Common myeloid progenitor, CD34-positive (primary cell): ENCODE measurements at regions of chr20 and their contacts with region 1.

Region 1: GRCh38 chr20:50460460-50461267 is 49.5 kb upstream of the PTPN1 start:
- DNase-seq: peak; percentile 67 to 74 (median 69)
- H3K4me3 ChIP-seq: no peak overlapping the region
- H3K27ac ChIP-seq: no peak overlapping the region
- H3K4me1 ChIP-seq: peaks cover 4 to 36% (median 32%) of the 10 kb centered on the region in 4 experiments
- H3K27me3 ChIP-seq: no peaks in the 10 kb centered on the region

Region 2: GRCh38 chr20:50189681-50190582 is 270.7 kb before region 1 on chr20:
- CTCF ChIA-PET with region 1: interaction called, 262 read pairs
- POLR2A ChIA-PET with region 1: interaction called, 3 read pairs
- DNase-seq: peak; percentile 83 to 91 (median 90)
- H3K4me3 ChIP-seq: peak overlapping the region in 6 of 7 experiments; percentile 79 to 91 (median 86)
- H3K27ac ChIP-seq: peak overlapping the region; percentile 61 to 91
- H3K4me1 ChIP-seq: peaks cover 2 to 48% (median 38%) of the 10 kb centered on the region in 4 experiments
- H3K27me3 ChIP-seq: no peaks in the 10 kb centered on the region

Region 3: DNA sequence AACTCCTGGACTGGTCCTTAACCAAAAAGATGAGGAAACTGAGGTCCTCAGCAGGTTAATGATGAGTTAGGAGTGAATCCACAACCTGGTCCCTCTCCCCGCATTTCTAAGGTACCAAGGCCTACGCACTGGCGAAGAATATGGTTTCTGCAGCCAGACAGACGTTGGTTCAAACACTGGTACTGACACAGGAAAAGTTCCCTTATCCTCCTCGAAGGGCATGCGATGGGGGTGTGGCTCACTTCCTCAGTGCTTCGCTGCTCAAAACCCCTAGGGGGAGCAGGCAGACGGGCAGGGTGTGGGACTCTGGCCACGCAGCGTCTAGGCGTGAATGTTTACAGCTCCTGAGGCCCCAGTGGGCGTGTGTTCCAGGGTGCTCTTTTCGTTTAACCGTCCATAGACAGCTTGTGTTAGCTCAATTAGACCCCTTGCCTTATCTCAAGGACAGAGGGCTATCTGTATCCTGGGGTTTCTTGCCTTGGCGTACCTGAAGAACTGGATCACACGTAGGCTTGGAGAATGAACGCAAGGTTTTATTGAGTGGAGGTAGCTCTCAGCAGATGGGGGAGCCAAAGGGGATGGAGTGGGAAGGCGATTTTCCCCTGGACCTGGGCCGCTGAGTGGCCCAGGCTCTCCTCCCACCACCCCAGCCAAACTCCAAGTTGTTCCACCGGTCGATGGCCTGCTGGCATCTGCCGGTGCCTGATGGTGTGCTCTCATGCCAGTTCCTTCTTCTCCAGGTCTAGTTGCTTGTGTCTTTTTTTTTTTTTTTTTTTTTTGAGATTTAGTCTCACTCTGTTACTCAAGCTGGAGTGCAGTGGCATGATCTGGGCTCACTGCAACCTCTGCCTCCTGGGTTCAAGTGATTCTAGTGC is 17.7 kb after region 1 on chr20:
- CTCF ChIA-PET with region 1: interaction called, 12 read pairs
- POLR2A ChIA-PET with region 1: no interaction called
- DNase-seq: peak; percentile 79 to 90 (median 89)
- H3K4me3 ChIP-seq: no peak overlapping the region
- H3K27ac ChIP-seq: no peak overlapping the region
- H3K4me1 ChIP-seq: peaks cover under 1 to 21% (median 20%) of the 10 kb centered on the region in 4 experiments
- H3K27me3 ChIP-seq: no peaks in the 10 kb centered on the region

Region 4: DNA sequence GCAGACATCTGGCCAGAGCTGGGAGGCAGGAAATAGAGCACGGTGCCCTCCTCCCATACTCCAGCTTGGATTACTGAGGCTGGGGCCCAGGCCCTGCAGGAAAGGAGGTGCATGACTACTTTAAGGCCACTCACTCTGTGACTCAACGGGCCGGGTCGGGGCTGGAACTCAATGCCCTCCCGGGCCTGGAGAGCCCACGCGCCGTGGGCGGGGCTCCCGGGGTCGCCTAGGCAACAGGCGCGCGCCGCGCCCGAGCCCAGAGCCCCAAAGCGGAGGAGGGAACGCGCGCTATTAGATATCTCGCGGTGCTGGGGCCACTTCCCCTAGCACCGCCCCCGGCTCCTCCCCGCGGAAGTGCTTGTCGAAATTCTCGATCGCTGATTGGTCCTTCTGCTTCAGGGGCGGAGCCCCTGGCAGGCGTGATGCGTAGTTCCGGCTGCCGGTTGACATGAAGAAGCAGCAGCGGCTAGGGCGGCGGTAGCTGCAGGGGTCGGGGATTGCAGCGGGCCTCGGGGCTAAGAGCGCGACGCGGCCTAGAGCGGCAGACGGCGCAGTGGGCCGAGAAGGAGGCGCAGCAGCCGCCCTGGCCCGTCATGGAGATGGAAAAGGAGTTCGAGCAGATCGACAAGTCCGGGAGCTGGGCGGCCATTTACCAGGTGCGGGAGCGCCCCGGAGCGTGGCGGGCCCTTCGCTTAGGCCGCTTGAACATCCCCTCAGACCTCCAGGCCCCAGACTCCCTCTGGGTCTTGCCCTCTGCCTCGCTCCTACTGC is 49.5 kb after region 1 on chr20 and contains the start of gene PTPN1:
- CTCF ChIA-PET with region 1: interaction called, 13 read pairs
- POLR2A ChIA-PET with region 1: no interaction called
- DNase-seq: peak; percentile 98 to 99 (median 98)
- H3K4me3 ChIP-seq: peak within 1 kb of the TSS; percentile 85 to 99 (median 96)
- H3K27ac ChIP-seq: peak within 1 kb of the TSS; percentile 89 to 93
- H3K4me1 ChIP-seq: peaks cover 23 to 53% (median 35%) of the 10 kb centered on the region in 4 experiments
- H3K27me3 ChIP-seq: no peaks in the 10 kb centered on the region

Region 5: GRCh38 chr20:50837532-50838506 is 377.2 kb after region 1 on chr20:
- CTCF ChIA-PET with region 1: no interaction called
- POLR2A ChIA-PET with region 1: no interaction called
- DNase-seq: peak; percentile 20 to 75 (median 50)
- H3K4me3 ChIP-seq: no peak overlapping the region
- H3K27ac ChIP-seq: no peak overlapping the region
- H3K4me1 ChIP-seq: no peaks in the 10 kb centered on the region
- H3K27me3 ChIP-seq: no peaks in the 10 kb centered on the region